ENCODE measurements at regions of chr19 and their contacts with region 1.

Region 1: GRCh38 chr19:7680606-7681339 is at the start of gene TRAPPC5:
- DNase-seq: peak; percentile 77 to 89
- H3K4me3 ChIP-seq: peak within 1 kb of the TSS; percentile 79 to 100
- H3K27ac ChIP-seq: peak within 1 kb of the TSS; percentile 77 to 88
- H3K4me1 ChIP-seq: peaks cover 0 to 20% (median 11%) of the 10 kb centered on the region in 4 donors
- H3K27me3 ChIP-seq: peaks cover 0 to 41% of the 10 kb centered on the region in 2 donors
- CTCF ChIP-seq: peak; percentile 96 to 97

Region 2: GRCh38 chr19:7098701-7099596 is 581.8 kb before region 1 on chr19:
- intact Hi-C with region 1: loop called (anchors 5 kb)
- DNase-seq: peak; percentile 88 to 96
- H3K4me3 ChIP-seq: peak overlapping the region; percentile 52 to 61
- H3K27ac ChIP-seq: peak overlapping the region; percentile 86 to 90
- H3K4me1 ChIP-seq: peaks cover 0 to 7% (median 0%) of the 10 kb centered on the region in 4 donors
- H3K27me3 ChIP-seq: no peaks in the 10 kb centered on the region
- CTCF ChIP-seq: no peak

Region 3: GRCh38 chr19:7562646-7563393 is 118.0 kb before region 1 on chr19:
- intact Hi-C with region 1: loop called (anchors 10 kb)
- DNase-seq: no peak
- H3K4me3 ChIP-seq: no peak overlapping the region
- H3K27ac ChIP-seq: no peak overlapping the region
- H3K4me1 ChIP-seq: no peaks in the 10 kb centered on the region
- H3K27me3 ChIP-seq: no peaks in the 10 kb centered on the region
- CTCF ChIP-seq: no peak